Posterior vena cava (tissue), 2 donors: ENCODE measurements at regions of chr2 and their contacts with region 1.

Region 1: DNA sequence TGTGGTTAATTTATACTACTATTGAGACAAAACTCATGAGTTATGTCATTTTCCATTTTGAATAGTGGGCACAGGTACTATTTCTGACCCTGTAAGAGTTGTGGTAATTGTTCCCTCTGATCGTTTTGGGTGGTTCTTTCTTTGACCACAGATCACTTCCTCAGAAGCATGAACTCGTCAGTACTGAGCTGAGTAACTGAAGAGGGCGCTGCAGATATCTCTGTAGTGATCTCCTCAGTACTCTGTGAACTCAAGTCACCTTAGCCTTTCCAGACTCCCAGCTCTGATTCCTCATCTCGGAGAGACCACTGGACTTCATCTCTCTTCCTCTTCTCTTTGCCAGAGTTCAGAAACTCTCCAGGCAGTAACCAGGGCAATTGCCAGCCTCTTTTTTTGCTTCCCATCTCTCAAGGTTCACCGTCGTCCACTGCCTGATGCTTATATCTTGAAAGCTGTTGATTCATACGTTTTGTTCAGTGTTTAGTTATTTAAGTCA is 9.4 kb upstream of the IL1RL1 start:
- DNase-seq: no peak

Region 2: DNA sequence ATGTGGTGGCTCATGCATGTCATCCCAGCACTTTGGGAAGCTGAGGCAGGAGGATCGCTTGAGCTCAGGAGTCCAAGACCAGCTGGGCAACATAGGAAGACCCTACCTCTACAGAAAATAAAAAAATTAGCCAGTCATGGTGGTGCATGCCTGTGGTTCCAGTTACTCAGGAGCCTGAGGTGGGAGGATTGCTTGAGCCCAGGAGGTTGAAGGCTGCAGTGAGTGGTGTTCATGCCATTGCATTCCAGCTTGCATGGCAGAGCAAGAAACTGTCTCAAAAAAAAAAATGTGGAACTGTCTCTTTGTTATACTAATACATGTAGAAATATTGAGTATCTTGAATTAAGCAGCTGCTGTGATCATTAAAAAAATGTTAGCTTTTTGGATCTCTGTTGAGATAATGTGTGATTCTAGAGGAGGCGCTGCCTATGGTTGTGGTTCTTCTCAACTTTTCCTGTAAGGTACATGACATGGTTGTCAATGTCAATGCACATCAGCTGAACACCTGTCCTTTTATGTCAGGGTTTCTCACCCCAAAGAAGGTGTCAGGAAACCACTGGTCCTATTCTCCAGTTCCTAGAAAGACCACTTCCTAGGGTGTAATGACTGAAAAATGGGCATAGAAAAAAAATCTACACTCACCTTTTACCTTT is 25.2 kb before region 1 on chr2:
- intact Hi-C with region 1: loop called in 1 of 2 experiments (anchors 1 kb)
- DNase-seq: no peak

Region 3: DNA sequence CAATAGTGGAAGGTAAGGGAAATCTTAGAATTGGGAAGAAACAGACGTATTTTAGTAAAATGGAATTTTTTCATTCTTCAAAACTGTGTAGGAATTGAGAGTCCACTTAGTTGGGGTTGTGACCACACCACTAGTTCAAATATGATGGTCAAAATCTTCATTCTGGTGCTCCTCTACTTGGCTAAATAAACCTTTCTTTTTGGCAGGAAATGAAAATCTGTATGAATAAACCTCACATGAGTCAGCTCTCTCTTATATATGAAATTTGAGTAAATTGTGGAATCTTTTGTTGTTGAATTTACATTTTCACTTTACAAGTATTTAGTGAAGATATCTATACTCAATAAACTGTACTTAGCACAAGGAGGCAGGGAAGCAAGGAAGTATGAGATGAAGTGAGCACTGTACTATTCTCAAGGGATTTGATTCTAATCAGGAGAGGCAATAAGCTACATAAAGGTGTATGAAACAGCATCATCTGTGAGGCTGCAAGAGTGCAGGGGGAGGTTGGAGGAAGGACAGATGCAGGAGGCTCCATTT is 74.2 kb after region 1 on chr2:
- intact Hi-C with region 1: loop called in 1 of 2 experiments (anchors 2 kb)
- DNase-seq: no peak